A673 (cell line): ENCODE measurements at regions of chr17 and their contacts with region 1.

Region 1: DNA sequence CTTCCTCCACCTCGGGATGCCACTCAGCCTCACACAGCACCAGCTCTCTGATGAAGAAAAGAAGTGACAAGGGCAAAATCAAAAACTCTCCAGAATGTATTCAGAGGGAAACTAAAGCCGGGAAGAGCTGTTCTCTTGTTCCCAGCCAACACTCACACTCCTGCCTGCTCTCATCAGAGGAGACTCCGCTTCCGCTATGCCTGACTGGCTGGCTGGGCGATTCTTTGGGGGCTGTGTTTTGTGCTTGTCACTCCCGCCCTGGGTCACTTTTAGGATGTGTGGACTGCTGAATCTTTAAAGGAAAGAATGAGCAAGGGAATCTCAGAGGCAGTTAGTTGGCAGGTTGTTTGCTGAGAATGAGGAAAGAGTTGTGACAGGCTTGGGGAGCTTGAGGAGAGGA is 54.6 kb upstream of the TBX2 start:
- DNase-seq: no peak
- H3K4me3 ChIP-seq: no peak overlapping the region
- H3K27ac ChIP-seq: no peak overlapping the region
- H3K4me1 ChIP-seq: no peaks in the 10 kb centered on the region
- H3K27me3 ChIP-seq: no peaks in the 10 kb centered on the region
- CTCF ChIP-seq: no peak

Region 2: GRCh38 chr17:61157246-61157886 is 187.7 kb before region 1 on chr17:
- CTCF ChIA-PET with region 1: interaction called, 11 read pairs
- POLR2A ChIA-PET with region 1: no interaction called
- intact Hi-C with region 1: no loop called
- DNase-seq: peak; percentile 54
- H3K4me3 ChIP-seq: no peak overlapping the region
- H3K27ac ChIP-seq: no peak overlapping the region
- H3K4me1 ChIP-seq: peaks cover 19% of the 10 kb centered on the region
- H3K27me3 ChIP-seq: no peaks in the 10 kb centered on the region
- CTCF ChIP-seq: no peak

Region 3: DNA sequence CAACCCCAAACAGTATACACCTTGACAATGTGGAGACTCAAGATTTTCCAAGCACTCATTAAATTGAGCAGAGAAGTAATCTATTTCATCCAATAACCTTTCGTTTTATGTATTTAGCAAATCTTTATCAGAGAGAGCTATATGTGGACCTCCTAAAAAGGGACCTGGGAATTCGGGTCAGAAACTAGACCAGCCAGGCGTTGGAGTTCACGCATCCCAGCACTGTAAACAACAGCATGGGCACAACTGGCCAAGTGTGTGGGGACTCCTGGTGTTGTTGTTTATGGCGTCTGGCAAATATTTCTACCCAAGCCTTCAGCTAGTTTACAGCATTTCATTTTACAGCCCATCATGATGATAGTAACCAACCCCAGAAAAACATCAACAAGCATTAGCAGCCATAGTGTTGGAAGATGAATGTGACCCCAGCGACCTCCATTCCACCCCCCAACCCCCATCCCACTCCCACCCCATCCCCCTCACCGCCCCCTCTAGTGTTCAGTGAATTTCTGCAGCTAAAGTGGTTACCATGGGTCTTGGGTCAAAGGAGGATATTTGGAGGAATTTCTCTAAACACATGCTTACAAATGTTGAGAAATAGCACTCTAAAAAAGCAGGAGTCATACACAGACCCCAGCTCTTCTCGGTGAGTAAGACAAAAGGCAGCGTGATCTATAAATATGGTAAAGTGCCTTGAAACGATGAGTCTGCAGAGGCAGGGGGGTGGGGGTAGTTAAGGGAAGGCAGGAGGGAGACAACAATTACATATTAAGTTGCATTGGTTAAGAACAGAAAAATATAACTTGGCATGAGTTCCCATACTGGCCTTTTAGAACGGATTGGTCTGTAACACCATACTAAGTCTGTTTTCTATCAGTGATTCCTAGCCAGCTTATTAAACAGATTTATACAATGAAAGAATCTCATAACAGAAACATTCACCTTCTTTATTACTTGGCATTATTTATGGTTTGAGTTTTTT is 36.9 kb before region 1 on chr17:
- CTCF ChIA-PET with region 1: no interaction called
- POLR2A ChIA-PET with region 1: no interaction called
- intact Hi-C with region 1: no loop called
- DNase-seq: no peak
- H3K4me3 ChIP-seq: no peak overlapping the region
- H3K27ac ChIP-seq: no peak overlapping the region
- H3K4me1 ChIP-seq: no peaks in the 10 kb centered on the region
- H3K27me3 ChIP-seq: no peaks in the 10 kb centered on the region
- CTCF ChIP-seq: no peak

Region 4: GRCh38 chr17:61431594-61432311 is 86.7 kb after region 1 on chr17:
- CTCF ChIA-PET with region 1: no interaction called
- POLR2A ChIA-PET with region 1: no interaction called
- intact Hi-C with region 1: no loop called
- DNase-seq: no peak
- H3K4me3 ChIP-seq: no peak overlapping the region
- H3K27ac ChIP-seq: no peak overlapping the region
- H3K4me1 ChIP-seq: no peaks in the 10 kb centered on the region
- H3K27me3 ChIP-seq: no peaks in the 10 kb centered on the region
- CTCF ChIP-seq: no peak

Region 5: DNA sequence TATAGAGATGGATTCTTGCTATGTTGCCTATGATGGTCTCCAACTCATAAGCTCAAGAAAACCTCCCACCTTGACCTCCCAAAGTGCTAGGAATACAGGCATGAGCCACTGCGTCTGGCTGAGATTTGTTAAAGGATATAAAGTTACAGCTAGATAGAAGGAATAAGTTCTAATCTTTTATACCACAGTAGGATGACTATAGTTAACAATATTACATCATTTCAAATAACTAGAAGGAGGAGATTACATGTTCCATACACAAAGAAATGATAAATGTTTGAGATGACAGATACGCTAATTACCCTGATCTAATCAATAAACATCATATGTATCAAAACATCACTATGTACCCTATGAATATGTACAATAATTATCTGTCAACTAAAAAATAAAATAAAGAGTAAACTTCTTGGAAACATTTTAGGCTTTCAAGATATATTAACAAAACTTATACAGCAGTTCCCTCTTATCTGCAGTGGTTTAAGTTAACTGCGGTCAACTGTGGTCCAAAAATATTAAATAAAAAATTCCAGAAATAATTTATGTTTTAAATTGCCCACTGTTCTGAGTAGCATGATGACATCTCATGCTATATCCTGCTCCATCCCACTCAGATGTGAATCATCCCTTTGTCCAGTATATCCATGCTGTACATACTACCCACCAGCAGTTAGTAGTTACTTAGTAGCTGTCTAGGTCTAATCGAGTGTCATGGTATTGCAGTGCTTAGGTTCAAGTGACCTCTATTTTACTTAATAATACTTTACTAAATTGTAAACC is 375.1 kb after region 1 on chr17:
- CTCF ChIA-PET with region 1: no interaction called
- POLR2A ChIA-PET with region 1: no interaction called
- intact Hi-C with region 1: no loop called
- DNase-seq: no peak
- H3K4me3 ChIP-seq: no peak overlapping the region
- H3K27ac ChIP-seq: no peak overlapping the region
- H3K4me1 ChIP-seq: no peaks in the 10 kb centered on the region
- H3K27me3 ChIP-seq: no peaks in the 10 kb centered on the region
- CTCF ChIP-seq: no peak